Activated B cell treated with CpG ODN at 0.5 μM for 24 hours (primary cell): ENCODE measurements at regions of chr2 and their contacts with region 1.

Region 1: DNA sequence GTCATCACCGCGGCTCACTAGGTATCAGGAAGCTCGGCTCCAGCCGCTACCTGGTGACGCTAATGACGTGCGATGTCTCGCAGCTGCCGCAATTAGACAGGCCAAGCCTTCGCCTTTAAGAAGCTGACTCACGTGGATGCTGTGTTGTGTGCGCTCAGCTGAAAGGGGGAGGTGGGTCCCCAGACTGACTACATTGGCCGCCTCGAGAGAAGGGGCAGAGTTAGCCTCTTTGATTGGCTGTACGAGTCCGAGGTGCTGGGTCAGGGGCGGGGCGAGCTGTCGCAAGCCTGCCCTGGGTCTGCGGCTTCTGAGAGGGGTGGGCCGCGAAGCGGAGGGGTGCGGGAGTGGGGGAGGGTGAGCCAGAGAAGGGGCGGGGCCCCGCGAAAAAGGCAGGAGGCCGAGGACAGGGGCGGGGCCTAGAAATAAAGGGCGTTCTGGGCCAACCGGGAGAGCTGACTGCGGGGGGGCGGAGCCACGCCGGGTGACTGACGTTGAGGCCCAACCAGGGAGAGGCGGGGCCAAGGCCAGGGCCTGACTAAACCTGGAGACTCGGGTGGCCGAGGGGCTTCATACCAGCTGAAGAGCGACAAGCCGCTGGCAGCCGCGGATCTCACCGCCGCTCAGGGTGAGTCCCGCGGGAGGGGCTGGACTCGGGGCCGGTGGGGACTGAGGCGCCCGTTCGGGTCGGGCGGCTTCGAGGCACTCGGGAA is at the start of gene YPEL5:
- DNase-seq: peak; percentile 98
- ATAC-seq: peak; percentile 85
- H3K4me3 Mint-ChIP-seq: peak within 1 kb of the TSS; percentile 86
- H3K27ac Mint-ChIP-seq: peak within 1 kb of the TSS; percentile 99
- H3K4me1 Mint-ChIP-seq: peaks cover 50% of the 10 kb centered on the region
- H3K27me3 Mint-ChIP-seq: no peaks in the 10 kb centered on the region
- CTCF ChIP-seq: no peak
- total RNA-seq, gene YPEL5: 56.7 and 57.4 TPM in 2 replicates

Region 2: DNA sequence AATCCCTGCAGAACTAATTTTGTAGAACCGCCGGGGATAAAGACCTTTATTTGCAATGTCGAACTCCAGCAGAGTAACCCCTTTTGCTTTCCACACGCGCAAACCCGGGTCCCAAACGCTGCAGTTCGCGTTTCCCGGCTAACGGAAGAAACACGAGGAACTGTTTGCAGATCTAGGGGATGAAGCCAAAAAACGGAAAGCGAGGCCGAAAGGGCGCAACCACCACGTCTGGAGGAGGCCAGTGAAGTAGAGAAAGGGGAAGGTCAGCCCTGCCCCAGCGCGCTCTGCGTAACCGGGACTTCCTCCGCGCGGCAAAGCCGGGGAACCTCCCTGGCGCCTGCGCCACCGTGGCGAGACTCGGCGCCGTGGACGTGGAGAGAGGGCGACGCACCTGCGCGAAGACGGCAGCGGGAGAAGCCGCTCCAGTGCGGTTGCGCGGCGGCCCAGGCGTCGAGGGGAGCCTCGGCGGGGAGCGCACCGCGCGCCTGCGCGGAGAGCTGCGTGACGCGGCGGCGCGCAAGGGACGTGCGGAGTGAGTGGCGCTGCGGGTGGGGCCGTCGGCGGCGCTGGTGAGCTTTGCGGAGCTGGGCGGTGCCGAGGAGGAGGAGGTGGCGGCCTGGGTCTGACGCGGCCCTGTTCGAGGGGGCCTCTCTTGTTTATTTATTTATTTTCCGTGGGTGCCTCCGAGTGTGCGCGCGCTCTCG is 1395.2 kb before region 1 on chr2 and contains the start of gene PPP1CB:
- CTCF ChIA-PET with region 1: no interaction called
- POLR2A ChIA-PET with region 1: no interaction called
- intact Hi-C with region 1: loop called (anchors 5 kb)
- DNase-seq: peak; percentile 96
- ATAC-seq: peak; percentile 86
- H3K4me3 Mint-ChIP-seq: peak within 1 kb of the TSS; percentile 95
- H3K27ac Mint-ChIP-seq: peak within 1 kb of the TSS; percentile 98
- H3K4me1 Mint-ChIP-seq: peaks cover 54% of the 10 kb centered on the region
- H3K27me3 Mint-ChIP-seq: no peaks in the 10 kb centered on the region
- CTCF ChIP-seq: no peak
- total RNA-seq, gene PPP1CB: 130 and 135 TPM in 2 replicates

Region 3: DNA sequence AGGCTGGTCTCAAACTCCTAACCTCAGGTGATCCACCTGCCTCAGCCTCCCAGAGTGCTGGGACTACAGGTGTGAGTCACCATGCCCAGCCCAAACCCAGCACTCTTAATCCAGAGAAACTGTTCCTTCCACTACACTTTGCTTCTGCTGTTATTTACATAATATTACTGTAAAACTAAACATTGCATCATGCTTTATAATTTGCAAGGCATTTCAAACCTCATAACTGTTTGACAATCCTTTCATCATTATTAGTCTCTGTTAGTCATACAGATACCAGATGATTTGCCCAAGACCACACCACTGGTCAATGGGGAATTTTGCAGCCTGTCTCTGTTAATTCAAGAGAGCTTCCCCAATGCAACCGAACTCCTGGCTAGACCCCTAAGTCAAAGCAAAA is 563.5 kb before region 1 on chr2:
- CTCF ChIA-PET with region 1: no interaction called
- POLR2A ChIA-PET with region 1: no interaction called
- intact Hi-C with region 1: no loop called
- DNase-seq: no peak
- ATAC-seq: no peak
- H3K4me3 Mint-ChIP-seq: no peak overlapping the region
- H3K27ac Mint-ChIP-seq: no peak overlapping the region
- H3K4me1 Mint-ChIP-seq: peaks cover 7% of the 10 kb centered on the region
- H3K27me3 Mint-ChIP-seq: peaks cover 2% of the 10 kb centered on the region
- CTCF ChIP-seq: no peak

Region 4: DNA sequence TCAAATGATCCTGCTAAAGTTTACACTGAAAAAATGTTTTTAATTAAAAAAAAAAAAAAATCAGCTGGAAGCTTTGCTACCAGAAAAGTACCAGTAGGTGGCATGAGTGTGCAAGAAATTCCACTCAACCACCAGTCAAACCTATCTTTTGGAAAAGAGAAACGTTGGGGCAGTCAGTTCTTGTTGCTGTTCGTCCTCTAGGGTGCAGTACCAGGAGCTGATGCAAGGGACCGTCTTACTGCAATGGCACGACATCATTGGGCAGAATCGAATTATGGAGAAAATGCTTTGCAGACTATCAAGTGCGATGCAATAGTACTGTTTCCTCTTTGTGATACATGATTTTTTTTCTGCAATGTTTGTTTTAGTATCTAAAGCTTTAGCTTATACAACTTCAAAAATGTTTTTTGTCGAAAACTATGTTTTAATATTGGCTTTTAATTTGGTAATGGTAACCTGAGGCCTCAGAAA is 18.5 kb after region 1 on chr2:
- CTCF ChIA-PET with region 1: interaction called, 62 read pairs
- POLR2A ChIA-PET with region 1: interaction called, 34 read pairs
- intact Hi-C with region 1: loop called (anchors 1 kb)
- DNase-seq: no peak
- ATAC-seq: peak; percentile 100
- H3K4me3 Mint-ChIP-seq: no peak overlapping the region
- H3K27ac Mint-ChIP-seq: no peak overlapping the region
- H3K4me1 Mint-ChIP-seq: peaks cover 21% of the 10 kb centered on the region
- H3K27me3 Mint-ChIP-seq: no peaks in the 10 kb centered on the region
- CTCF ChIP-seq: peak; percentile 45

Region 5: DNA sequence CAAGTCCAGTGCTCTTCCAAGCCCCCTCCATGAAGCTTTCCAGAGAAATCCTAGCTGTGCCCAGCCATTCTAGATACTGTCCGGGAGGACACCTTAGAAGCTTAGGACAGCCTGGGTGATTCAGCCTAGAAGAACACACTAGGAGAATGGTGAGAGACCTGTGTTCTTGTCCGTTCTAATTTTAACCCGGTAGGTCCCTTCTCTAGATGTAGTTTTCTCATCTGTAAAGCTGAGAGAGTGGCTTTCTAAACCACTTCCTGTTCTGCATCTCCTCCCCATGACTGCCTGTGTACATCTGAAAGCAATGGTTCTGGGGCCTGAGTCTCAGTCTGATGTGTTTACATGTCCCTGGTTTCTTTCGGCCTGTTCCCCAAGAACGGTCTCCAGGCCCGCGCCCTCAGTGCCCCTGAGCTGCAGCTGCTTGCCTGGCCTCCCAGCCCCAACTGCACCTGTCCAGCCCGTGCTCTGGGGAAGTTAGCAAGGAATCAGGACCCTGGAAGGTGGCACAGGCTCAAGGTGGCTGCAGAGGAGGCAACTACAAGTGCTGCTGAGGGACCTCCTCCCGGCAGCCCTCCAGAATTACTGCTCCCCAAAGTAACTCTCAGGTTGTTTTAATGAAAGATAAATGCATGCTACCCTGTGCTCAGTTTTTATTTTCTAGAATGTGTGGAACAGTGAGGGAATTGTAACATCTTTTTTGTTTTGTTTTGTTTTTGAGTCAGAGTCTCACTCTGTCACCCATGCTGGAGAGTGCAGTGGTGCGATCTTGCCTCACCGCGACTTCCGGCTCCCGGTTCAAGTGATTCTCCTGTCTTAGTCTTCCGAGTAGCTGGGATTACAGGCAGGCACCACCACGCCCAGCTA is 190.6 kb after region 1 on chr2:
- CTCF ChIA-PET with region 1: no interaction called
- POLR2A ChIA-PET with region 1: interaction called, 5 read pairs
- intact Hi-C with region 1: loop called (anchors 1 kb)
- DNase-seq: peak; percentile 49
- ATAC-seq: peak; percentile 85
- H3K4me3 Mint-ChIP-seq: peak overlapping the region; percentile 76
- H3K27ac Mint-ChIP-seq: peak overlapping the region; percentile 98
- H3K4me1 Mint-ChIP-seq: peaks cover 95% of the 10 kb centered on the region
- H3K27me3 Mint-ChIP-seq: no peaks in the 10 kb centered on the region
- CTCF ChIP-seq: no peak

Region 6: DNA sequence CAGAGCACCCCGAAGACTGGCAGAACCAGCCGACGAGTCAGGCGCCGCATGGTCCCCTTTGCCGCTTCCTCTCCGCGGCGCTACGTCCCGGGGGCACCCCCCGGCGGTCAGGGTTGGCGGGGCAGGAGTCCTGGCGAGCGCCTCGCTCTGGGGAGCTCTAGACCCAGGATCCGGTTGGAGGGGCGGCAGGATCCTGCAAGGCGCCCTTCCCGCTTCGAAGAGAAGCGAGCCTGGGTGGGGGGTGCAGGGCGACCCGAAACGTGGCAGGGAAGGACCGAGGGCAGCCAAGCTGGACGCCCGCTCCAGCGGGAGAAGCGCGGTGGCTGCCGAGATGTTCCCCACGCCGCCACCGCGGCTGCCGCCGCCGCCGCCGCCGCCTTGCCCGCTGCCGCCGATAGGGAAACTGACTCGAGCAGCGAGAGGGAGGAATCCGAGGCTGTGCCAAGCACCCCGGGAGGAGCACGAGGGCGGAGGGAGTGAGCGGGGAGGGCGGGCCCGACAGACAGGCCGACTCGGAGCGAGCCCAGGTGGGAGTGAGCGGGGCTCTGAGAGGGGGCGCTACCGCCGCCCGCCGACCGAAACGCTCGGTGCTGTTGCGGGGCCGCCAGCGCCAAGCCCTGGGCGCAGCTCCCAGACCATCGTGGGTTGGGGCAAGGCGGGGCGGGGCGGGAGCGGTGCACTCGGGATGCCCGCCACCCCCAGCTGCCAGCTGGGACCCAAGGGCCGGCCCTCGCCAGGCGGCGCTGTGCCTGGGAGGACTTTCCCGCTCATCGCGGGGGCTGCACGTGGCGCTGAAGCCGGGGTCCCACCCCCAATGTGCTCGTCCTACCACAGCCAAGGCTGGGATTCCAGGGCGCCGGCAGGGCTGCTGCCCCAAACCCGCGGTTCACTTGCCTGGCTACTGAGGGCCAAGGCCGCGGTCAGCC is 991.7 kb after region 1 on chr2 and contains the start of gene GALNT14:
- CTCF ChIA-PET with region 1: no interaction called
- POLR2A ChIA-PET with region 1: no interaction called
- intact Hi-C with region 1: loop called (anchors 10 kb)
- DNase-seq: peak; percentile 64
- ATAC-seq: peak; percentile 76
- H3K4me3 Mint-ChIP-seq: peak within 1 kb of the TSS; percentile 85
- H3K27ac Mint-ChIP-seq: no peak within 1 kb of the TSS
- H3K4me1 Mint-ChIP-seq: peaks cover 8% of the 10 kb centered on the region
- H3K27me3 Mint-ChIP-seq: peaks cover 5% of the 10 kb centered on the region
- CTCF ChIP-seq: no peak
- total RNA-seq, gene GALNT14: 6.6 and 7.9 TPM in 2 replicates

Region 7: GRCh38 chr2:31255911-31256571 is 1109.4 kb after region 1 on chr2:
- CTCF ChIA-PET with region 1: no interaction called
- POLR2A ChIA-PET with region 1: interaction called, 5 read pairs
- intact Hi-C with region 1: loop called (anchors 5 kb)
- DNase-seq: peak; percentile 58
- ATAC-seq: peak; percentile 70
- H3K4me3 Mint-ChIP-seq: peak overlapping the region; percentile 72
- H3K27ac Mint-ChIP-seq: peak overlapping the region; percentile 84
- H3K4me1 Mint-ChIP-seq: peaks cover 85% of the 10 kb centered on the region
- H3K27me3 Mint-ChIP-seq: no peaks in the 10 kb centered on the region
- CTCF ChIP-seq: no peak

Region 8: GRCh38 chr2:32063310-32064161 is 1916.9 kb after region 1 on chr2 and contains the start of gene SPAST:
- CTCF ChIA-PET with region 1: no interaction called
- POLR2A ChIA-PET with region 1: no interaction called
- intact Hi-C with region 1: loop called (anchors 2 kb)
- DNase-seq: peak; percentile 96
- ATAC-seq: peak; percentile 93
- H3K4me3 Mint-ChIP-seq: peak within 1 kb of the TSS; percentile 97
- H3K27ac Mint-ChIP-seq: peak within 1 kb of the TSS; percentile 93
- H3K4me1 Mint-ChIP-seq: peaks cover 30% of the 10 kb centered on the region
- H3K27me3 Mint-ChIP-seq: no peaks in the 10 kb centered on the region
- CTCF ChIP-seq: no peak
- total RNA-seq, gene SPAST: 17.6 and 20.8 TPM in 2 replicates